Heart right ventricle (tissue), 16 donors: ENCODE measurements at regions of chr3 and their contacts with region 1.

Region 1: GRCh38 chr3:113844622-113845222 is 6.1 kb downstream of the GRAMD1C start:
- DNase-seq: no peak
- ATAC-seq: no peak
- H3K4me3 ChIP-seq: no peak overlapping the region
- H3K27ac ChIP-seq: no peak overlapping the region
- H3K4me1 ChIP-seq: peaks cover 0 to 1% (median 0%) of the 10 kb centered on the region in 9 donors
- H3K27me3 ChIP-seq: no peaks in the 10 kb centered on the region
- CTCF ChIP-seq: peak in 7 of 9 donors; percentile 49 to 70 (median 57)

Region 2: GRCh38 chr3:113912552-113913236 is 68.0 kb after region 1 on chr3:
- intact Hi-C with region 1: loop called in 8 of 10 experiments (anchors 2 to 10 kb)
- DNase-seq: no peak
- ATAC-seq: peak in 1 of 8 donors; percentile 51
- H3K4me3 ChIP-seq: no peak overlapping the region
- H3K27ac ChIP-seq: no peak overlapping the region
- H3K4me1 ChIP-seq: no peaks in the 10 kb centered on the region
- H3K27me3 ChIP-seq: peaks cover 0 to 4% (median 0%) of the 10 kb centered on the region in 7 donors
- CTCF ChIP-seq: peak in 8 of 9 donors; percentile 6 to 55 (median 50)

Region 3: DNA sequence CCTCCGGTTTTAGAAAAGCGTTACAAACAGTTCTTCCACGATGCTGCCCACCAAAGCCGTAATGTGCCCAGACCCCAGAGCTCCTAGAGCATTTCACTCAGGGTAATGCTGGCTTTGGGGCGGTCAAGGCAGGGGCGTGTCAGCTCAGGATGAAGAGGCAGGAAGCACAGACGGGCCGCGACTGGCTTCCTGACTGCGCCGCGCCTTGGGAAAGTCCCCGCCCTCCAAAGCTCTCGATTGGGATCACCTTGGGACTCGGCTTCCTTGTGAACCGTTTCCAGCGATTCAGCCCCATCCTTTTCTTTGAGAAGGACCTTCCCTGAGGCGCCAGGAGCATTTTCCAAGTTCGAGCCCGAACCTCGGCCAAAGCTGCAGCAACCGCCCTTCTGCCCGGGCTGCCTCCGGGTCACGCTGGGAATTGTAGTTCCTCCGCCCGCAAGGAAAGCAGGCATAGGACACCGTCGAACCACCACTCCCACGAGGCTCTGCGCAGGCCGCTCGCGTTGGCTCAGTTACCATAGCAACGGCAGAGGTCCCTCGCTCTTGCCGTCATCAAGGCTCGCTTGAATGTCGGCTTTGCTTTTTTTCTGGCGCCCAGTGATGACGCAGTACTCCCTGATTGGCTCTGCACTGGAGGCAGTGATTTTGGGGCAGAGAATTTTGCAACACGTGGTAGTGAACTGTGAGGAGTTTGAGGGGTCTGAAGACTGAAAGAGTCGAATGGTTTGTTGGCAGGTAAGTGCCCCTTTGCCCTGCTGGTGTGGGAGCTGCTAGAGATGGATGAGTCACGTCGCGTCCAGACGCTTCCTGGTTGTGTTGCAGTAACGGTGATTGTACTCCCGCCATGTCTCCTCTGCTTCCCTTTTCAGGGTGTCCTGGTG is 211.6 kb after region 1 on chr3 and contains the starts of genes CCDC191 and QTRT2:
- intact Hi-C with region 1: loop called in 1 of 10 experiments (anchors 5 kb)
- DNase-seq: peak; percentile 96 to 100
- ATAC-seq: peak; percentile 99 to 100 (median 100)
- H3K4me3 ChIP-seq: peak within 1 kb of the TSS; percentile 58 to 85 (median 72)
- H3K27ac ChIP-seq: peak within 1 kb of the TSS; percentile 16 to 89 (median 82)
- H3K4me1 ChIP-seq: peaks cover 0 to 31% (median 16%) of the 10 kb centered on the region in 9 donors
- H3K27me3 ChIP-seq: no peaks in the 10 kb centered on the region
- CTCF ChIP-seq: no peak
- total RNA-seq, gene CCDC191: 0.68 to 3.6 (median 1.8) TPM
- total RNA-seq, gene QTRT2: 3.6 to 9.7 (median 5.2) TPM

Region 4: DNA sequence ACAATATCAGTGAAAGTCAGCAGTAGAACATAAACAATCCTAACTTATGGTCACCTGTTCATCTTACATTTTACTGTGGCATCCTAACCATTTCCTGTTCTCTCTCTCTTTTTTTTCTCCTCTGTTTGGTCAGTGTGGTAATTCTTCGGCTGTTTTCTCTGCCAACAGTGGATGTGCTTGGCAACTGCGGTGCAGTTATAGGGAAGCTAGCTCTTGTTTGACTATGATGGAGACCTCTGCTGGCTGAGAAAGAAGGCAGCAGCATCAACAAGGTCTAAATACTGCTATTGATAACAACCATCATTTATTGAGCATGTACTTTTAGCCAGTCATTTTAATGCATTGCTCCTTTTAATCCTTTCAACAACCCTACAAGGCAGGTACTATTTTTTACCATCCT is 334.9 kb after region 1 on chr3:
- intact Hi-C with region 1: loop called in 1 of 10 experiments (anchors 10 kb)
- DNase-seq: no peak
- ATAC-seq: no peak
- H3K4me3 ChIP-seq: no peak overlapping the region
- H3K27ac ChIP-seq: no peak overlapping the region
- H3K4me1 ChIP-seq: peaks cover 0 to 16% (median 0%) of the 10 kb centered on the region in 9 donors
- H3K27me3 ChIP-seq: peaks cover 0 to 6% (median 0%) of the 10 kb centered on the region in 7 donors
- CTCF ChIP-seq: peak in 5 of 9 donors; percentile 6 to 37 (median 31)